Dorsolateral prefrontal cortex (tissue), 120 donors: ENCODE measurements at regions of chr16 and their contacts with region 1.

Region 1: GRCh38 chr16:23835390-23836077 is at the start of gene PRKCB:
- DNase-seq: peak; percentile 80 to 96 (median 91)
- H3K4me3 ChIP-seq: peak within 1 kb of the TSS; percentile 53 to 87 (median 76)
- H3K27ac ChIP-seq: peak within 1 kb of the TSS in 54 of 59 donors; percentile 5 to 89 (median 74)
- H3K27me3 ChIP-seq: peaks cover 0 to 4% (median 0%) of the 10 kb centered on the region in 45 donors
- CTCF ChIP-seq: peak in 8 of 56 donors; percentile 3 to 41 (median 12)
- total RNA-seq, gene PRKCB: 111 to 409 (median 291) TPM

Region 2: GRCh38 chr16:23952128-23952970 is 116.8 kb after region 1 on chr16:
- intact Hi-C with region 1: loop called in 1 of 2 experiments (anchors 5 kb)
- DNase-seq: peak in 9 of 10 donors; percentile 37 to 79 (median 59)
- H3K4me3 ChIP-seq: peak overlapping the region in 22 of 59 donors; percentile 1 to 40 (median 14)
- H3K27ac ChIP-seq: peak overlapping the region in 51 of 59 donors; percentile 6 to 83 (median 58)
- H3K27me3 ChIP-seq: no peaks in the 10 kb centered on the region
- CTCF ChIP-seq: no peak